ENCODE measurements at regions of chr11 and their contacts with region 1.

Region 1: GRCh38 chr11:72683782-72684200 is 9.6 kb upstream of the PDE2A start:
- DNase-seq: peak; percentile 54
- H3K4me3 ChIP-seq: no peak overlapping the region
- H3K27ac ChIP-seq: no peak overlapping the region
- H3K4me1 ChIP-seq: no peaks in the 10 kb centered on the region
- H3K27me3 ChIP-seq: peaks cover 0 to 2% of the 10 kb centered on the region in 2 experiments
- CTCF ChIP-seq: peak; percentile 97
- POLR2A ChIP-seq: no peak

Region 2: GRCh38 chr11:72396041-72396440 is 287.8 kb before region 1 on chr11:
- CTCF ChIA-PET with region 1: no interaction called
- POLR2A ChIA-PET with region 1: no interaction called
- dilution Hi-C with region 1: no loop called
- intact Hi-C with region 1: no loop called
- DNase-seq: no peak
- H3K4me3 ChIP-seq: no peak overlapping the region
- H3K27ac ChIP-seq: no peak overlapping the region
- H3K4me1 ChIP-seq: no peaks in the 10 kb centered on the region
- H3K27me3 ChIP-seq: no peaks in the 10 kb centered on the region
- CTCF ChIP-seq: no peak
- POLR2A ChIP-seq: no peak

Region 3: DNA sequence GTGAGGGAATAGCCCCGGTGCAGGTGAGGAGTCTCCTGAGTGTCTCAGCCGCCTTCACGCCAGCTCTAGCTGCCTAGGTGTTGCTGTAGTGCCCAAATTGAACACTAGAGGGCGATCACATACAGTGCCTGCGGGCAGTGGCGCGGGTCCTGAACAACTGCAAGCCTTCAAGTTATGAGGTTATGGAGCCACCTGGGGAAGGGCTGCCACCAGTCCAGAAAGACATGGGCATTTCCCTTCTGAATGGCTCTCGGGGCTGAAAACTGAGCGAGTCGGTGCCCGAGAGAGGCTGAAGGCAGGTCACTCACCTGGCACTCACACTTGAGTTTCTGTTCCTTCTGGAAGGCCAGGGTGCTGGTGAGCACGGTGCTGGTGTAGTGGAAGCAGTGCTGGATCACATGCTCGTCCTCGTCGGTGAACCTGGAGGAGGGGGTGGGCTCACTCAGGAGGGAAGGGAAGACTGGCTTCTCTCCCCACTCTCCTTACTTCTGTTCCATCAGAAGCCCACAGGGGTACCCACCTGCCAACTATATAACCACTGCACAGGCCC is 98.0 kb before region 1 on chr11:
- CTCF ChIA-PET with region 1: interaction called, 339 read pairs
- POLR2A ChIA-PET with region 1: no interaction called
- dilution Hi-C with region 1: no loop called
- intact Hi-C with region 1: loop called (anchors 1 kb)
- DNase-seq: peak; percentile 69
- H3K4me3 ChIP-seq: no peak overlapping the region
- H3K27ac ChIP-seq: no peak overlapping the region
- H3K4me1 ChIP-seq: no peaks in the 10 kb centered on the region
- H3K27me3 ChIP-seq: peaks cover 2 to 6% of the 10 kb centered on the region in 2 experiments
- CTCF ChIP-seq: peak; percentile 83 to 86
- POLR2A ChIP-seq: no peak

Region 4: GRCh38 chr11:72631806-72632731 is 51.7 kb before region 1 on chr11:
- CTCF ChIA-PET with region 1: interaction called, 12 read pairs
- POLR2A ChIA-PET with region 1: no interaction called
- dilution Hi-C with region 1: no loop called
- intact Hi-C with region 1: no loop called
- DNase-seq: peak; percentile 86
- H3K4me3 ChIP-seq: no peak overlapping the region
- H3K27ac ChIP-seq: peak overlapping the region; percentile 83
- H3K4me1 ChIP-seq: peaks cover 38% of the 10 kb centered on the region
- H3K27me3 ChIP-seq: no peaks in the 10 kb centered on the region
- CTCF ChIP-seq: no peak
- POLR2A ChIP-seq: peak; percentile 76

Region 5: DNA sequence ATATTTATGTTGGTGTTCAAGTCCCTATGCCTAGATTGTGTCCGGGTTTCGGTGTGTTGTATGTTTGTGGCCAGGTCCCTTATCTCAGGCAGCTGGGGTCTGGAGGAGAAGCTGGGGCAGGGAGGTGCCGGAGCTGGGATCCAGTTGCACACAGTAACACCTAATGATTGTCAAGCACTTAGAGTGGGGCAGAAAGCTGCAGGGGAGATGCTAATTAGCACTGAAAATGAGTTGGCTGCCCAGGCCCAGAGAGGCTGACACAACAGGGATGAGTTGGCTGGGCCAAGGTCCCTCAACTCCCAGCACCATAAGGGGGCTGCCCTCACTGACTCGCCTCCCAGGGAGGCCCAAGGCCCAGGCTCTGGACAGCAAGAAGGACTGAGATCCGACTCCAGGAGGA is 21.8 kb before region 1 on chr11:
- CTCF ChIA-PET with region 1: interaction called, 19 read pairs
- POLR2A ChIA-PET with region 1: no interaction called
- dilution Hi-C with region 1: no loop called
- intact Hi-C with region 1: no loop called
- DNase-seq: no peak
- H3K4me3 ChIP-seq: no peak overlapping the region
- H3K27ac ChIP-seq: no peak overlapping the region
- H3K4me1 ChIP-seq: no peaks in the 10 kb centered on the region
- H3K27me3 ChIP-seq: peaks cover 6 to 7% of the 10 kb centered on the region in 2 experiments
- CTCF ChIP-seq: no peak
- POLR2A ChIP-seq: no peak

Region 6: GRCh38 chr11:73028611-73029010 is 344.8 kb after region 1 on chr11:
- CTCF ChIA-PET with region 1: no interaction called
- POLR2A ChIA-PET with region 1: no interaction called
- dilution Hi-C with region 1: no loop called
- intact Hi-C with region 1: no loop called
- DNase-seq: no peak
- H3K4me3 ChIP-seq: no peak overlapping the region
- H3K27ac ChIP-seq: no peak overlapping the region
- H3K4me1 ChIP-seq: no peaks in the 10 kb centered on the region
- H3K27me3 ChIP-seq: no peaks in the 10 kb centered on the region
- CTCF ChIP-seq: no peak
- POLR2A ChIP-seq: no peak

Region 7: DNA sequence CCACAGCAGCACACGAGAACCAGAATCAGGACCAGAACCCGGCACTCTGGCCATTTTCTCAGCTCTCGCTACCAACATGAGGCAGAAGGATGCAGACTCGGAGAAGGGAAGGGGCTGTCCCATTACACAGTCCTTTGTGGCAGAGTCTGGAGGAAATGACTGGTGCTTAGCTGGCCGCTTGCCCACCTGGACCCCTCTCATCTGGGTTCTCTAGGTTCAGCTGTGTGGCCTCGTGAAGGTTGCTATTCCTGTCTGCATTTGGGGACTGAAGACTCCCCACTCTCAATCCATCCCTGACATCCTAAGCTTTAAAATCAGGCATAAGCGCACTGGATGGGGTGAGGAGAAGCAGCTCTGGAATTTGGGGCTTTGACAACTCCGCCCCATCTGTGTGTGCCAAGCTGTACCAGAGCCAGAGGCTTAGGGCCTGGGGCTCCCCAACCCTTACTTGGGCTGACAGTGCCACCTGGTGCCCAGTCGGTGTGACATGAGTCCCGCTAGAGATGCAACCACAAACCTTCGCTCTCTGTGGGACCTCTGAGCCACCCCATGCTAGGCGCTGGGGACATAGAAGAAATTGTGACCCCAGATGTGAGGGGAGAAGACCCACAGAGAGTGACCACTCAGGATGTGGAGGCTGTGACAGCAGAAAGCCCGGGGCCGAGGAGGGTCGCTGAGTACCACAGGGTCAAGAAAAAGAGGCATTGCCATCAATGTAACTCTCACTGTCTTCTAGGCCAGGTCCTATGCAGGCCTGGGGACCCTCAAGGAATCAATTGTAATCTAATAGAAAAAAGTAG is 494.2 kb after region 1 on chr11:
- CTCF ChIA-PET with region 1: interaction called, 16 read pairs
- POLR2A ChIA-PET with region 1: no interaction called
- dilution Hi-C with region 1: no loop called
- intact Hi-C with region 1: loop called (anchors 1 kb)
- DNase-seq: peak; percentile 94
- H3K4me3 ChIP-seq: no peak overlapping the region
- H3K27ac ChIP-seq: peak overlapping the region; percentile 90
- H3K4me1 ChIP-seq: peaks cover 28% of the 10 kb centered on the region
- H3K27me3 ChIP-seq: no peaks in the 10 kb centered on the region
- CTCF ChIP-seq: peak; percentile 76 to 85
- POLR2A ChIP-seq: no peak

Measured in endothelial cell of umbilical vein (primary cell).